Endothelial cell of umbilical vein (primary cell): ENCODE measurements at regions of chr7 and their contacts with region 1.

Region 1: GRCh38 chr7:151028131-151028947 is at the start of gene ABCB8:
- DNase-seq: peak; percentile 99
- H3K4me3 ChIP-seq: peak within 1 kb of the TSS; percentile 66 to 88 (median 83)
- H3K27ac ChIP-seq: peak within 1 kb of the TSS; percentile 57
- H3K4me1 ChIP-seq: peaks cover 13% of the 10 kb centered on the region
- H3K27me3 ChIP-seq: no peaks in the 10 kb centered on the region
- CTCF ChIP-seq: peak; percentile 32 to 49
- POLR2A ChIP-seq: peak; percentile 73
- total RNA-seq, gene ABCB8: 46.3 and 48.5 TPM in 2 replicates

Region 2: GRCh38 chr7:151017953-151018420 is 10.4 kb before region 1 on chr7:
- CTCF ChIA-PET with region 1: interaction called, 24 read pairs
- POLR2A ChIA-PET with region 1: no interaction called
- dilution Hi-C with region 1: no loop called
- intact Hi-C with region 1: no loop called
- DNase-seq: peak; percentile 58
- H3K4me3 ChIP-seq: no peak overlapping the region
- H3K27ac ChIP-seq: no peak overlapping the region
- H3K4me1 ChIP-seq: peaks cover 7% of the 10 kb centered on the region
- H3K27me3 ChIP-seq: peaks cover 12 to 14% of the 10 kb centered on the region in 2 experiments
- CTCF ChIP-seq: peak; percentile 98 to 99
- POLR2A ChIP-seq: no peak

Region 3: GRCh38 chr7:151057989-151058780 is 29.8 kb after region 1 on chr7:
- CTCF ChIA-PET with region 1: interaction called, 5 read pairs
- POLR2A ChIA-PET with region 1: no interaction called
- dilution Hi-C with region 1: no loop called
- intact Hi-C with region 1: loop called (anchors 1 kb)
- DNase-seq: peak; percentile 100
- H3K4me3 ChIP-seq: peak overlapping the region in 2 of 3 experiments; percentile 11 to 69
- H3K27ac ChIP-seq: peak overlapping the region; percentile 81
- H3K4me1 ChIP-seq: peaks cover 29% of the 10 kb centered on the region
- H3K27me3 ChIP-seq: no peaks in the 10 kb centered on the region
- CTCF ChIP-seq: no peak
- POLR2A ChIP-seq: peak; percentile 52

Region 4: GRCh38 chr7:151085691-151086620 is 57.6 kb after region 1 on chr7 and contains the start of gene AGAP3:
- CTCF ChIA-PET with region 1: interaction called, 5 read pairs
- POLR2A ChIA-PET with region 1: interaction called, 4 read pairs
- dilution Hi-C with region 1: no loop called
- intact Hi-C with region 1: loop called (anchors 1 kb)
- DNase-seq: peak; percentile 80
- H3K4me3 ChIP-seq: peak within 1 kb of the TSS; percentile 81 to 96 (median 82)
- H3K27ac ChIP-seq: peak within 1 kb of the TSS; percentile 98
- H3K4me1 ChIP-seq: peaks cover 59% of the 10 kb centered on the region
- H3K27me3 ChIP-seq: no peaks in the 10 kb centered on the region
- CTCF ChIP-seq: peak in 1 of 2 donors; percentile 1
- POLR2A ChIP-seq: peak; percentile 89
- total RNA-seq, gene AGAP3: 171 and 173 TPM in 2 replicates